ENCODE measurements at regions of chr17 and their contacts with region 1.

Region 1: GRCh38 chr17:42221937-42222745 is 27.8 kb upstream of the GHDC start:
- DNase-seq: peak; percentile 66 to 74
- ATAC-seq: peak; percentile 87 to 92
- H3K4me3 ChIP-seq: no peak overlapping the region
- H3K27ac ChIP-seq: no peak overlapping the region
- H3K4me1 ChIP-seq: no peaks in the 10 kb centered on the region
- CTCF ChIP-seq: peak; percentile 74
- EP300 ChIP-seq: no peak
- POLR2A ChIP-seq: no peak
- RAD21 ChIP-seq: peak; percentile 74 to 81

Region 2: GRCh38 chr17:42087736-42088705 is 134.1 kb before region 1 on chr17:
- CTCF ChIA-PET with region 1: no interaction called
- POLR2A ChIA-PET with region 1: no interaction called
- DNase-seq: no peak
- ATAC-seq: peak; percentile 47 to 48; a peak in 5 of 6 replicates
- H3K4me3 ChIP-seq: no peak overlapping the region
- H3K27ac ChIP-seq: no peak overlapping the region
- H3K4me1 ChIP-seq: 0 out of 3 replicates have a peak, but pooled peaks cover 3% of the 10 kb centered on the region
- CTCF ChIP-seq: no peak
- EP300 ChIP-seq: no peak
- POLR2A ChIP-seq: no peak
- RAD21 ChIP-seq: no peak

Region 3: DNA sequence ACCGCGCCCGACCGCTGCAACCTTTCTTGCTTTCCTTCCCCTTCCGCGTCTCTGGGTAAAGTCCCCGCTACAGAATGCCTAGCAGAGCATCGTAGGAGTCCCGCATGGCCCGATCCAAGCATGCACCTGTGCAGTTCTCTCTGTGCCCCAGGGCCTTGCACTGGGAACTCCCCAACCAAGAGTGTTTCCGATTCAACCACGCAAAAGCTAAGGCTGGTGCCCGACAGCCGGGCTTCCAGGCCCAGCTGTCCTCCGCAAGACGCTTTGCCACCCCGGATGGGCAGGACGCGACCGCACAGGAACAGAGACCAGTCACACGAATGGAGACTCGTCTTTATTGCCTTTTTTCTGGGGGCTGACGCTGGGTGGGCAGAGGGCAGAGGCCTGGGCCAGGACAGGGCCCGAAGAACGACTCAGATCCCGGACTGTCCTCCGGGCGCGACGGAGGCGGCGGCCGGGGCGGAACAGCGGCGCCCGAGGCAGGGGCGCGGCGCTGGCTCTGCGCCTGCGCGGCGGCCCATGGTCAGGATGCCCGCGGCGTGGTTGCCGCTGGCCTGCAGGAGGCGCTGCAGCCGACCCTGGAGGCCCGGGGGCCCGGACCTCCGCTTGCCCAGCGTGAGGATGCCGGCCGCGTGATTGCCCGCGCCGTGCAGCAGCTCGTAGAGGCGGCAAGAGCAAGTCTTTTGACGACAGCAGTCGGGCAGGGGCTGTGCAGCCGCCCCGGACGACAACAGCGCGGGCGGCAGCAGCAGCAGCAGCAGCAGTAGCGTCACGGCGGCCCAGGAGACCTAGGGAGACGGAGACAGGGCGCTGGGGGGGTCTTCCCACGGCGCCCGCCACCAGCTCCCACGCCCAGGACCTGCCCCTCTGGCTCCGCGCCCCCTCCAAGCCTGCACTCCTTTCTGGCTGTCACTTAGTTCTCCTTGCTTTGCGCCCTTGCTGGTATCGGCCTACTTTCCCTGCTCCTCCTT is 38.1 kb before region 1 on chr17:
- CTCF ChIA-PET with region 1: interaction called, 19 read pairs
- POLR2A ChIA-PET with region 1: no interaction called
- DNase-seq: peak; percentile 74 to 78
- ATAC-seq: peak; percentile 47 to 72
- H3K4me3 ChIP-seq: peak overlapping the region; percentile 48
- H3K27ac ChIP-seq: peak overlapping the region; percentile 74 to 87
- H3K4me1 ChIP-seq: peaks cover 38% of the 10 kb centered on the region
- CTCF ChIP-seq: peak; percentile 97
- EP300 ChIP-seq: no peak
- POLR2A ChIP-seq: peak; percentile 28; the same call in 1 of the 2 replicates
- RAD21 ChIP-seq: peak; percentile 37 to 58; a peak in 4 of 5 replicates

Region 4: DNA sequence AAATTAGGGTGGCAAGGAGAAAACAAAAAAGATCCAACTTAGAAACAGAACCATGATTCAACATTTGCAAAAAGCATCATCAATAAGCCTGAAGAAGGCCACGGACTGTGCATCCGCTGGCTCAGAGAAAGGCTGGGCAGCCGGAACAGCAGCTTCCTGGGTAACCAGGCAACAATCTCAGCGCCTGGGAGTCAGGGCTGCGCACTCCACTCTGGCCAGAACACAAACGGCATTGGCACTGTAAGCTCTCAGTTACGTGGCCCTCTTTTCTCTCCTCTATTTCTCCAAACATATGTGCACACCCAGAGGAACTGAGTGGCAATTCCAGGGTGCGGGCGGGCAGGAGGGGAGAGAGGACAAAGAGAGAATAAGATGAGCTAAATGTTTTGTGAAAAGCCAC is 21.4 kb before region 1 on chr17:
- CTCF ChIA-PET with region 1: interaction called, 14 read pairs
- POLR2A ChIA-PET with region 1: no interaction called
- DNase-seq: no peak
- ATAC-seq: no peak
- H3K4me3 ChIP-seq: no peak overlapping the region
- H3K27ac ChIP-seq: peak overlapping the region in 1 of 2 experiments; percentile 19; a peak in 1 of 6 replicates
- H3K4me1 ChIP-seq: peaks cover 18% of the 10 kb centered on the region
- CTCF ChIP-seq: no peak
- EP300 ChIP-seq: no peak
- POLR2A ChIP-seq: no peak
- RAD21 ChIP-seq: no peak

Region 5: DNA sequence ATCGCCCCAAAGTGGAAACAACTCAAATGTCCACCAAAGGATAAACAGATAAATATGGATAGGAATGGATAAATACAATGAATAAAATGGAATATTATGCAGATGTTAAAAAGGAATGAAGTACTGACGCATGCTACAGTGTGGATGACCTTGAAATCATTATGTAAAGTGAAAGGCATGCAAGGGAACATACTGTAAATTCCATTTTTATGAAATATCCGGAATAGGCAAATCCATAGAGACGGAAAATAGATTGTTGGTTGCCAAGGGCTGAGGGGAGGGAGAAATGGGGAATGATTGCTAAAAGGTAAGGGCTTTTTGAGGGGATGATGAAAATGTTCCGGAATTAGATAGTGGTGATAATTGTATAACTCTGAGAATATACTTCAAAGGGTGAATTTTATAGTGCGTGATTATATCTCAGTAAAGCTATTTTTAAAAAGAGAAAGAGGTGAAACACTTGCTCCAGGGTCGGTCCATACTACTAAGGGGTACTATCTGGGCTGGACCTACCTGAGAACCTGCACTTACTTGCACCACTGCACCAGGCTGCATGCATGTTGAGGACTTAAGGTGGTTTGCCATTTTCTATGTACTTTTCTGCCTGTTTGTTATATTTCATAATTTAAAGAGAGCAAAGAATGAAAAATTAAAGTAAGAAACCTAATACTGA is 18.2 kb after region 1 on chr17:
- CTCF ChIA-PET with region 1: interaction called, 21 read pairs
- POLR2A ChIA-PET with region 1: no interaction called
- DNase-seq: no peak
- ATAC-seq: no peak
- H3K4me3 ChIP-seq: no peak overlapping the region
- H3K27ac ChIP-seq: no peak overlapping the region
- H3K4me1 ChIP-seq: peaks cover 16% of the 10 kb centered on the region
- CTCF ChIP-seq: no peak
- EP300 ChIP-seq: no peak
- POLR2A ChIP-seq: no peak
- RAD21 ChIP-seq: no peak

Region 6: GRCh38 chr17:42248351-42249179 is 26.4 kb after region 1 on chr17:
- CTCF ChIA-PET with region 1: interaction called, 34 read pairs
- POLR2A ChIA-PET with region 1: no interaction called
- DNase-seq: no peak
- ATAC-seq: no peak
- H3K4me3 ChIP-seq: no peak overlapping the region
- H3K27ac ChIP-seq: no peak overlapping the region
- H3K4me1 ChIP-seq: peaks cover 39% of the 10 kb centered on the region
- CTCF ChIP-seq: no peak
- EP300 ChIP-seq: no peak
- POLR2A ChIP-seq: no peak
- RAD21 ChIP-seq: no peak

Region 7: DNA sequence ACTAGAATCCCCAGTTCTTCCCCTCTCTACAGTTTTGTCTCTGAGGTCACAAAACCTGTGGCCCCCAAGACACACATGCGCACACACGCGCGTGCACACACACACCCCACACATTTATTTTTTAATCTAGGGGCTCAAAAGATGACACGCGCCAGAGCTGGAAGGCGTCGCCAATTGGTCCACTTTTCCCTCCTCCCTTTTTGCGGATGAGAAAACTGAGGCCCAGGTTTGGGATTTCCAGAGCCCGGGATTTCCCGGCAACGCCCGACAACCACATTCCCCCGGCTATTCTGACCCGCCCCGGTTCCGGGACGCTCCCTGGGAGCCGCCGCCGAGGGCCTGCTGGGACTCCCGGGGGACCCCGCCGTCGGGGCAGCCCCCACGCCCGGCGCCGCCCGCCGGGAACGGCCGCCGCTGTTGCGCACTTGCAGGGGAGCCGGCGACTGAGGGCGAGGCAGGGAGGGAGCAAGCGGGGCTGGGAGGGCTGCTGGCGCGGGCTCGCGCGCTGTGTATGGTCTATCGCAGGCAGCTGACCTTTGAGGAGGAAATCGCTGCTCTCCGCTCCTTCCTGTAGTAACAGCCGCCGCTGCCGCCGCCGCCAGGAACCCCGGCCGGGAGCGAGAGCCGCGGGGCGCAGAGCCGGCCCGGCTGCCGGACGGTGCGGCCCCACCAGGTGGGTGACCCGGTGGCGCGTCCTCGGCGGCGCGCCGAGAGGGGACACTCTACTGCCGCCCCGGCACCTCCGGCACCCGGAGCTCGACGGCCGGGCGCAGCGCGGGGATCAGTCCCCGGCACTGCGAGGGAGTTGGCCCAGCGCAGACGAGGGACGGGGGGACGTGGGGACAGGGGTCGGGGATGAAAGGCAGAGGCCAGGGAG is 66.0 kb after region 1 on chr17 and contains the start of gene STAT5A:
- CTCF ChIA-PET with region 1: interaction called, 12 read pairs
- POLR2A ChIA-PET with region 1: no interaction called
- DNase-seq: peak; percentile 73 to 83
- ATAC-seq: peak; percentile 81 to 86
- H3K4me3 ChIP-seq: peak within 1 kb of the TSS; percentile 62
- H3K27ac ChIP-seq: peak within 1 kb of the TSS; percentile 79 to 92
- H3K4me1 ChIP-seq: peaks cover 12% of the 10 kb centered on the region
- CTCF ChIP-seq: no peak
- EP300 ChIP-seq: no peak
- POLR2A ChIP-seq: no peak; the same call in 1 of the 2 replicates
- RAD21 ChIP-seq: 0 out of 5 replicates have a peak, but pooled peaks of 1 of the 2 experiments have one; percentile 13
- polyA plus RNA-seq, gene STAT5A: 2.2 and 3.1 TPM in 2 replicates

Region 8: GRCh38 chr17:42337442-42337841 is 115.3 kb after region 1 on chr17:
- CTCF ChIA-PET with region 1: no interaction called
- POLR2A ChIA-PET with region 1: no interaction called
- DNase-seq: no peak
- ATAC-seq: no peak
- H3K4me3 ChIP-seq: no peak overlapping the region
- H3K27ac ChIP-seq: no peak overlapping the region
- H3K4me1 ChIP-seq: peaks cover 15% of the 10 kb centered on the region
- CTCF ChIP-seq: no peak
- EP300 ChIP-seq: no peak
- POLR2A ChIP-seq: no peak; the same call in 1 of the 2 replicates
- RAD21 ChIP-seq: no peak